ENCODE measurements at regions of chrX and their contacts with region 1.

Region 1: DNA sequence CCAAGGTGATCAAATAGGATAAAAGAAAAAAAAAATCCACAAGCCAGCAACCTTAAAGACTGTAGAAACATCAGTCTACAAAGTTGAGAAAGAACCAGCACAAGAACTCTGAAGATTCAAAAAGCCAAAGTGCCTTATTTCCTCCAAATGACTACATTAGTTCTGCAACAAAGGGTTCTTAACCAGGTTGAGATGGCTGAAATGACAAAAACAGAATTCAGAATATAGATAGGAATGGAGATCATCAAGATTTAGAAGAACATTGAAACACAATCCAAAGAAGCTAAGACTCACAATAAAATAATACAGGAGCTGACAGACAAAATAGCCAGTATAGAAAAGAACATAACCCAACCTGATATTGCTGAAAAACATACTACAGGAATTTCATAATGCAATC is 156.5 kb upstream of the ZCCHC13 start:
- DNase-seq: no peak
- H3K4me3 ChIP-seq: no peak overlapping the region
- H3K27ac ChIP-seq: no peak overlapping the region
- H3K4me1 ChIP-seq: no peaks in the 10 kb centered on the region
- H3K27me3 ChIP-seq: no peaks in the 10 kb centered on the region
- CTCF ChIP-seq: no peak
- EP300 ChIP-seq: no peak
- POLR2A ChIP-seq: no peak

Region 2: DNA sequence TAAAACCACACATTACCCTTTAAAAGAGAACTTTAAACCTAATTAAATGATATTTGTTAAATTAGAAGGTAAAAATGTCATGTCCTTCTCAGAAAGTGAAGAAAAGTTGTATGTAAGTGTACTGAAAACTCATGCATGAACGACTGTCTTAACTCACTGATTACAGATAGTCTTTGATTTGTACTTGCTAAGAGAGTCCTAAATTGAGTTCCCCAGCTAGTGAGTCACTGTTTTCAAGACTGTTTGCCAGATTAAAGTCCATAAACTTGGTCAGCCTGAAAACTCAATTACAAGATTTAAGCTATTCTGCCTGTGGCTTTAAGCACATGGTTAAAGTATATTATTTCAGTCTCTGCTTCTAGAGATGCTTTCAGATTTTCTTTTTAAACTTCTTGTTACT is 31.6 kb after region 1 on chrX:
- in situ Hi-C with region 1: no loop called
- intact Hi-C with region 1: loop called (anchors 1 kb)
- DNase-seq: no peak
- H3K4me3 ChIP-seq: no peak overlapping the region
- H3K27ac ChIP-seq: peak overlapping the region in 3 of 4 donors; percentile 24 to 56 (median 29)
- H3K4me1 ChIP-seq: peaks cover 0 to 12% (median 0%) of the 10 kb centered on the region in 4 donors
- H3K27me3 ChIP-seq: no peaks in the 10 kb centered on the region
- CTCF ChIP-seq: no peak
- EP300 ChIP-seq: no peak
- POLR2A ChIP-seq: no peak

Region 3: DNA sequence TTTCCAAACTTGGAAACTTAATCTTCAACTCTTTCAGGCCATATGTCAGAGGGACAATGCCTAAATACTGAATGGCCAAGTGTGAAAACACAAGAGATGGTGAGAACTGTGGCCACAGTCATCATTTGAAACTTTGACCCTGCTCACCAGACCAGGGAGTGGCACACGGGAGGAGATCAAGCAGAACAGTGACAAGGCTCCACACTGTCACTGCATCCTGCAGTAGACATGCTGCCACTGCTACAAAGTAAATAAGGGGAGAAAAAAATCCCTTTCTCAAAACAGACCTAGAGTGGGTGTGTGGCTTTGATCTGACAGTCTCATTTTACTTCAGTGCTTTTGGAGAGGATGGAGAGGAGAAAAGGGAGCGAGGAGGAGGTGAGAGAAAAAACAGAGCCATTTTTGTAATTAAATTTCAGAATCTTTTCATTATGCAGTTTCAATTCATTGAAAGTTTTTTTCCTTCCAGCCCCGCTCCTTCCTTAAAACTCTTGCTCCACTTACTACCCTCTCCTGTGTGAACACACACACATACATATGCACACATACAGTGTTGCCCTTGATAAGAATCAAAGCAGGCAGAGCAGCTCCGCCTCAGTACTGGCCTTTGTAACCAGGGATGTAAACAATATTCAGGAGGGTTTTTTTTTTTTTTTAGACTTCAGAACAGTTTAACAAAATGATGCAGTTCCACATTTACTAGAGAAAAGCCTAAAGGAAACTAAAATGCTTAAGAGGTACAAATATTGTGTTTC is 743.4 kb after region 1 on chrX:
- in situ Hi-C with region 1: no loop called
- intact Hi-C with region 1: no loop called
- DNase-seq: peak; percentile 20
- H3K4me3 ChIP-seq: no peak overlapping the region
- H3K27ac ChIP-seq: no peak overlapping the region
- H3K4me1 ChIP-seq: no peaks in the 10 kb centered on the region
- H3K27me3 ChIP-seq: no peaks in the 10 kb centered on the region
- CTCF ChIP-seq: no peak
- EP300 ChIP-seq: no peak
- POLR2A ChIP-seq: no peak